Cardiac septum (tissue), 1 donor: ENCODE measurements at regions of chr7 and their contacts with region 1.

Region 1: GRCh38 chr7:116671681-116672595 is at the start of gene MET:
- DNase-seq: peak; percentile 81
- total RNA-seq, gene MET: 9.2 TPM

Region 2: DNA sequence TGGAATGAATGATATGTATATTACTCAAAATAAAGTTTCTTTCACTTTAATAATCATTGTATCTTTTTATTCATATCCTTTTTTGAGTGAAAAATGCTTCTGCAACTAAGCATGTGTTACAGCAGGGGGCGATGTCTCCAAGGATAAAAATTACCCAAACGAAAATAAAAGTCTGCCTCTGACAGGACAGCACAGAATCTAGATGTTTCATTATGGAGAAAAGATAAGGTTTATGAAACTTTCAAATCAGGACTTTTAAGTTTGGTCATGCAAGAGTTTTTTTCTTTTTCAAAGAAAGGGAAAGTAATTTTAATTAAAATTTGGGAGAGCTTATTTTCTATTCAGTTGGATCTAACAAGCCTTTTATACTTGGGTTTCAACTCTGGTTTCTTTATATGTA is 413.2 kb before region 1 on chr7:
- intact Hi-C with region 1: loop called (anchors 10 kb)
- DNase-seq: no peak

Region 3: GRCh38 chr7:116786791-116787443 is 115.0 kb after region 1 on chr7:
- intact Hi-C with region 1: loop called (anchors 5 kb)
- DNase-seq: no peak